ENCODE measurements at regions of chr4 and their contacts with region 1.

Region 1: GRCh38 chr4:40515398-40516293 is 114.0 kb downstream of the RBM47 start:
- DNase-seq: no peak
- ATAC-seq: peak; percentile 79
- H3K4me3 Mint-ChIP-seq: peak overlapping the region; percentile 67
- H3K27ac Mint-ChIP-seq: peak overlapping the region; percentile 48
- H3K4me1 Mint-ChIP-seq: peaks cover 44% of the 10 kb centered on the region
- H3K27me3 Mint-ChIP-seq: no peaks in the 10 kb centered on the region
- CTCF ChIP-seq: no peak

Region 2: DNA sequence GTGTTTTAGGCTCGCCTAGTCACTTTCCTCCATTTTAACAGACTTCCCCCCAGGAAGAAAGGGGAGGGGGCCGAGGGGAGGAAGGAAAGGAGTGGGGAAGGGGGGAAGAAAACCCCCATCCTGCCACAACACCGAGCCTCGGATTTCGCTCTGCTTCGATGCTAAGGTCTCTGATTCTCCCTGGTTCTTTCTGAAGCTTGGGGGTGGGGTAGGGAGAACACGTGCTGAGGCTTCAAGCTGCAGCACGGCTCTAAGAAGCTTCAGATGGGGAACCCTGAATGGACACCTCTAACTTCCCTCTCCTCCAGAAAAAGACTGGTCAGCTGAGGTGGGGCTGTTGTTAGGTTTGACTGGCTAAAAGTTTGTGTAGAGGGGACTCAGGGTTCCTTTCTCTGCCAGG is 257.0 kb before region 1 on chr4:
- CTCF ChIA-PET with region 1: no interaction called
- POLR2A ChIA-PET with region 1: no interaction called
- intact Hi-C with region 1: no loop called
- DNase-seq: no peak
- ATAC-seq: no peak
- H3K4me3 Mint-ChIP-seq: no peak overlapping the region
- H3K27ac Mint-ChIP-seq: no peak overlapping the region
- H3K4me1 Mint-ChIP-seq: peaks cover 40% of the 10 kb centered on the region
- H3K27me3 Mint-ChIP-seq: no peaks in the 10 kb centered on the region
- CTCF ChIP-seq: no peak

Region 3: DNA sequence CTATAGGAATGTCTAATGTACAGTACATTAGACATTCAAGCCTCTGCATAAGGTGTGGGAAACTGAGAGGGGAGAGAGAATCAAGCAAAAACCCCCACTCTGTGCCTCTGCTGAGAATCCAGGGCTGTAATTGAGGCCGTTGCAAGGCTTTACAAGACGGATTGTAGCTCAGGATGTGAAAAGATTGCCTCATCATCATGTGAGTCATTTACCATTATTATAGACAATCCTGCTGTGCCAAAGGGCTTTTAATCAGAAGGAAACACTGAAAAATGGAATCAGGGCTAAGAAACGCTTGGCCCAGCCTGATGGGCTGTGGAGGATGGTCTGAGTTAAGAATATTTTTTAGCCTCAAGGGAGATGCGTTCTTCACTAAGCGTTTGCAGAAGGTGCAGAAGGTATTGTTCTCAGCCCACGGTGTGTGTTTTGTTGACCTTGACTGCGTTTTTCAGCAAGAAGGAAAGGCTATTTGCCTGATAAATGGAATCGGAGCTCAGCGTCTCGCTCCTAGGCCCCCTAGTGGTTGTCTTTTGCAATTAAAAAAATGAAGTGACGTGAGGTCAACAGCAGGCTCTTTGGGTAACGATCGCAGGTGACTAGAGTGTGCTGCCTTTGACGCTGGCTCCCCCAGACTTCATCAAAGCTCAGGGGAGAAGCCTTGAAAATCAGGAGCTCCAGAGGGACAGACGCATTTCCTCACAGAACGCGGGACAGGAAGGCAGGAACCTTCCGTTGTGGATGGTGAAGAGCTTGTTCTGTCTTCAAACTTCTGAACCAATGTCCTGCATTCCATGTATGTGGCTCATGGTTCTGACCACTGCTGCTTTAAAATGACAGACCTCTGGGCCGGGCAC is 198.6 kb before region 1 on chr4:
- CTCF ChIA-PET with region 1: no interaction called
- POLR2A ChIA-PET with region 1: no interaction called
- intact Hi-C with region 1: loop called (anchors 1 kb)
- DNase-seq: peak; percentile 38
- ATAC-seq: peak; percentile 82
- H3K4me3 Mint-ChIP-seq: peak overlapping the region; percentile 84
- H3K27ac Mint-ChIP-seq: peak overlapping the region; percentile 87
- H3K4me1 Mint-ChIP-seq: peaks cover 28% of the 10 kb centered on the region
- H3K27me3 Mint-ChIP-seq: no peaks in the 10 kb centered on the region
- CTCF ChIP-seq: peak; percentile 48

Region 4: DNA sequence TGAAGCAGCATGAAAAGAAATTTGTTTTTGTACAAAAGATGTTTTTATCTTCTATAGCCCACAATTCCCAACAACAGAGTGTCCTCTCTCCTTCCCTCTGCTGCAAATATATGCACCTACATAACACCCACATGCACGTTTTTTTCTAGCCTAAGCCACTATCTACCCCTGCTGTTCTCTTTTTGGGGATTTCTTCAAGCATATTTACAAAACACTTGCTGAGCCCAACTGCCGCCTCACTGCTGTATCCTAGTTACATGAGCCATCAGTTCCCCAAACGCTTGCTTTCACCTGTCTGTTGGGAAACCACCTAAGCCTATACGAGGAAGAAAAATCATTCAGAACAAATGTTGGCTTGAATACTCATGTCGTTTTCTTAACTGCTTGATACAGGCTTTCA is 53.3 kb before region 1 on chr4:
- CTCF ChIA-PET with region 1: no interaction called
- POLR2A ChIA-PET with region 1: no interaction called
- intact Hi-C with region 1: loop called (anchors 2 kb)
- DNase-seq: no peak
- ATAC-seq: peak; percentile 95
- H3K4me3 Mint-ChIP-seq: no peak overlapping the region
- H3K27ac Mint-ChIP-seq: peak overlapping the region; percentile 72
- H3K4me1 Mint-ChIP-seq: peaks cover 17% of the 10 kb centered on the region
- H3K27me3 Mint-ChIP-seq: no peaks in the 10 kb centered on the region
- CTCF ChIP-seq: no peak

Region 5: GRCh38 chr4:40536032-40536431 is 20.4 kb after region 1 on chr4:
- CTCF ChIA-PET with region 1: interaction called, 3 read pairs
- POLR2A ChIA-PET with region 1: interaction called, 9 read pairs
- intact Hi-C with region 1: loop called (anchors 1 kb)
- DNase-seq: no peak
- ATAC-seq: peak; percentile 74
- H3K4me3 Mint-ChIP-seq: peak overlapping the region; percentile 46
- H3K27ac Mint-ChIP-seq: peak overlapping the region; percentile 76
- H3K4me1 Mint-ChIP-seq: peaks cover 17% of the 10 kb centered on the region
- H3K27me3 Mint-ChIP-seq: no peaks in the 10 kb centered on the region
- CTCF ChIP-seq: no peak

Region 6: GRCh38 chr4:40629401-40630334 is 114.0 kb after region 1 on chr4 and contains the start of gene RBM47:
- CTCF ChIA-PET with region 1: no interaction called
- POLR2A ChIA-PET with region 1: no interaction called
- intact Hi-C with region 1: loop called (anchors 10 kb)
- DNase-seq: peak; percentile 29
- ATAC-seq: peak; percentile 65
- H3K4me3 Mint-ChIP-seq: peak within 1 kb of the TSS; percentile 93
- H3K27ac Mint-ChIP-seq: peak within 1 kb of the TSS; percentile 84
- H3K4me1 Mint-ChIP-seq: peaks cover 22% of the 10 kb centered on the region
- H3K27me3 Mint-ChIP-seq: peaks cover 5% of the 10 kb centered on the region
- CTCF ChIP-seq: no peak
- total RNA-seq, gene RBM47: 6.3 and 8.0 TPM in 2 replicates

Region 7: GRCh38 chr4:40662962-40663604 is 147.4 kb after region 1 on chr4:
- CTCF ChIA-PET with region 1: no interaction called
- POLR2A ChIA-PET with region 1: no interaction called
- intact Hi-C with region 1: no loop called
- DNase-seq: no peak
- ATAC-seq: no peak
- H3K4me3 Mint-ChIP-seq: no peak overlapping the region
- H3K27ac Mint-ChIP-seq: no peak overlapping the region
- H3K4me1 Mint-ChIP-seq: no peaks in the 10 kb centered on the region
- H3K27me3 Mint-ChIP-seq: peaks cover 1% of the 10 kb centered on the region
- CTCF ChIP-seq: no peak

Measured in activated B cell treated with CpG ODN at 0.5 μM for 24 hours (primary cell).